Head of caudate nucleus (tissue), 42 donors: ENCODE measurements at regions of chr15 and their contacts with region 1.

Region 1: DNA sequence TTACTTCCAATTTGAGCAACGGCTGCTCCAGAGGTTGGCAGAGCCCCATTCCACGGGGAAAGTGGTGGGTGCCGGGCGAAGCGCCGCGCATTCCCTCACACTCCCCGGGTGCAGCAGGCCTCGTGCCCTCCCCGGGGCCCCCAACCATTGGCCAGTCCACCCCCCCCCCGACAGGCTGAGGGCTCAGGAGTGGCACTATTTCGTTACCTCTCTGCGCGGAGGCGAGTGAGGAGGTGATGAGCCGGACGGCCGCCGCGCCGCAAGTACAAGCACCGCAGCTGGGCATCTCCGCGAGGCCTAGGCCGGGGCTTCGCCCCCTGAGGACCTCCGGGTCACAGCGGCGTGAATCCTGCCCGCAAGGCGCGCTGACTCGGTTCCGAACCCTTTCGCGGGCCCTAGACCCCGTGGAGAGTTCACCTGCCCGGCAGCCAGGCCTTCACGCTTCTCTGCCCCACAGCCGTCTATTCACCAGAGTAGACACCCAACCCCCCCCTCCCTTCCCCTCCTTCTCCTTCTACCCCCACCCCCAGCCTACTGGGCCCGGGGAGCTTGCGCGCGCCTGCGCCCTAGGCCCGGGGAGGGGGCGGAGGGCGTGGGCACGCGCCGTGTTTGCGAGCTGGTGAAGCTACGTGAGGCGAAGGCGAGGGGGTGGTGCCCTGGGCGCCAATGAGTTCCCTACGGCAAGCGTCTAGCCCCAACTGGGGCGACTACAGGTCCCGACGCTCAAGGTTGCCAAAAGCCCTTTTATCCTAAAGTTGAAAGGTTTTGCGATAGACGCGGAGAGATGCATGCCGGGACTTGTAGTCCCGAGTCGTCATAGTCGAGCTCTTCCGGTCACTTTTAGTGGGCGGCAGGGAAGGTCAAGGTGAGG is at the start of gene CLPX:
- DNase-seq: peak; percentile 80 to 95 (median 90)

Region 2: GRCh38 chr15:65133548-65134200 is 51.4 kb before region 1 on chr15 and contains the start of gene PDCD7:
- intact Hi-C with region 1: loop called (anchors 10 kb)
- DNase-seq: peak; percentile 87 to 97 (median 93)

Region 3: GRCh38 chr15:65298731-65299130 is 113.6 kb after region 1 on chr15:
- intact Hi-C with region 1: loop called (anchors 5 kb)
- DNase-seq: no peak